ENCODE measurements at regions of chr2 and their contacts with region 1.

Region 1: DNA sequence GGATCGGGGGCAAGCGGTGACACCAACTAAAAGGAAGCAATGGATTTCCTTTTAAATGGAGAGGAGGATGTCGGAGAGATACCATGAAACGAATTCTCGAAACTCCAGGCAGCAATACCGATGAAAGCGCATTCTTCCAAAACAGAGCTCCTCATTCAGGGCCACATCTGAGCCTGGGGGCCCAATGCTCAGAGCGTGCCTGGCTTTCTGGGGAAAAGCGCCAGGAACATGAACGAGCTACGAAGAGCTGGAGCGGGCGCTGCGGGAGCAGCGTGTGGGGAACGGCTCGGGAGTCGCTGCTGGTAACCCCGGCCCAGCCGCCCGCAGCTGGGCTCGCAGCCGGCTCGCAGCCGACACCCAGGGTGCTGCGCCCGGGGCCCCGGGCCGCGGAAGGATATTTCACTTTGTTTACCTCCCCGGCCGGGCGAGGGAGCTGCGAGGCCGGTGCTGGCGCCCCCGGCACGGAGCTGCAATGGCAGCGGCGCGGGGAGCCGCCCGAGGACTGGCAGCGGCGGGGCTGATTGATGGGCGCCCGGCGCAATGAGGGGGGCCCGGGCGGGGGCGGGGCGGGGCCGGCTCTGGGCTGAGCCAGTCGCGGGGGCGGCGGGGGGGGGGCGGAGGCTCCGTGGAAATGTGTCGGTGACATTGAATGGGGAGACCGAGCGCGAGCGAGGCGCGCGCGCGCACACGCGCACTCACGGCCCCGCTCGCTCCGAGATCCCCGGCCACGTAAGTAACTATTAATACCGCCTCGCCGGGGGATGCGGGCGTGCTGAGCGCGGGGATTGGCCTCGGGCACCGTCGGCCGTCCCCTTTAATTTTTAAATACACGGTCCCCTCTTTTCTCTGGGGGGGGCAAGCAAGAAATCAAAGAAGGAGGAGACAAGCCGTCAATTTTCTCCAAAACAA is at the start of gene TRIB2:
- DNase-seq: peak; percentile 78 to 90 (median 88)
- ATAC-seq: peak; percentile 88
- H3K4me3 ChIP-seq: peak within 1 kb of the TSS; percentile 86
- H3K4me3 Mint-ChIP-seq: peak within 1 kb of the TSS; percentile 88 to 100 (median 99)
- H3K27ac ChIP-seq: peak within 1 kb of the TSS; percentile 88
- H3K27ac Mint-ChIP-seq: peak within 1 kb of the TSS; percentile 93 to 97 (median 96)
- H3K4me1 ChIP-seq: peaks cover 10 to 18% of the 10 kb centered on the region in 2 donors
- H3K4me1 Mint-ChIP-seq: peaks cover 32 to 65% (median 56%) of the 10 kb centered on the region in 7 donors
- H3K27me3 ChIP-seq: no peaks in the 10 kb centered on the region
- H3K27me3 Mint-ChIP-seq: peaks cover 0 to 15% (median 0%) of the 10 kb centered on the region in 5 donors
- total RNA-seq, gene TRIB2: 63.1 to 125 (median 110) TPM

Region 2: DNA sequence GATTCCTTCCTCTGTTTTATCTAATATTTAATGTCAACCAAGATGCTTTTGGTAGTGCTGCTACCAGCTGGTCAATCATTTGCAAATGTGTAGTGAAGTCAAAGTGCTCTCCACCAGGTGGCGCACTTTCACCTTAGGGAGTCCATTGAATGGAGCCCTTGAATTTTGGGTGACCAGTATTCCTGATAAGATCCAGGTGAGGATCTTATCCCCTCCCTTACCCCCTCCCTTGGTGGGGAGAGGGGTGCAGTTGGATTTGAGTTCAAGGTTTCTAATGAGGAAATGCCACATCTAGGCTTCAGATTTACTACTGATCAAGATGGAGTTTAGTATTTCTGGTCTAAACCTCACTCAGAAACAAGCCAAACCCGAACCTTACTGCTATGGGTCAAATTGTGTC is 1238.5 kb before region 1 on chr2:
- CTCF ChIA-PET with region 1: no interaction called
- POLR2A ChIA-PET with region 1: no interaction called
- intact Hi-C with region 1: loop called in 1 of 2 experiments (anchors 5 kb)
- DNase-seq: peak; percentile 44 to 79 (median 63)
- ATAC-seq: peak; percentile 77
- H3K4me3 ChIP-seq: no peak overlapping the region
- H3K4me3 Mint-ChIP-seq: no peak overlapping the region
- H3K27ac ChIP-seq: no peak overlapping the region
- H3K27ac Mint-ChIP-seq: no peak overlapping the region
- H3K4me1 ChIP-seq: no peaks in the 10 kb centered on the region
- H3K4me1 Mint-ChIP-seq: peaks cover 0 to 8% (median 6%) of the 10 kb centered on the region in 7 donors
- H3K27me3 ChIP-seq: no peaks in the 10 kb centered on the region
- H3K27me3 Mint-ChIP-seq: peaks cover 28 to 39% (median 32%) of the 10 kb centered on the region in 5 donors

Region 3: DNA sequence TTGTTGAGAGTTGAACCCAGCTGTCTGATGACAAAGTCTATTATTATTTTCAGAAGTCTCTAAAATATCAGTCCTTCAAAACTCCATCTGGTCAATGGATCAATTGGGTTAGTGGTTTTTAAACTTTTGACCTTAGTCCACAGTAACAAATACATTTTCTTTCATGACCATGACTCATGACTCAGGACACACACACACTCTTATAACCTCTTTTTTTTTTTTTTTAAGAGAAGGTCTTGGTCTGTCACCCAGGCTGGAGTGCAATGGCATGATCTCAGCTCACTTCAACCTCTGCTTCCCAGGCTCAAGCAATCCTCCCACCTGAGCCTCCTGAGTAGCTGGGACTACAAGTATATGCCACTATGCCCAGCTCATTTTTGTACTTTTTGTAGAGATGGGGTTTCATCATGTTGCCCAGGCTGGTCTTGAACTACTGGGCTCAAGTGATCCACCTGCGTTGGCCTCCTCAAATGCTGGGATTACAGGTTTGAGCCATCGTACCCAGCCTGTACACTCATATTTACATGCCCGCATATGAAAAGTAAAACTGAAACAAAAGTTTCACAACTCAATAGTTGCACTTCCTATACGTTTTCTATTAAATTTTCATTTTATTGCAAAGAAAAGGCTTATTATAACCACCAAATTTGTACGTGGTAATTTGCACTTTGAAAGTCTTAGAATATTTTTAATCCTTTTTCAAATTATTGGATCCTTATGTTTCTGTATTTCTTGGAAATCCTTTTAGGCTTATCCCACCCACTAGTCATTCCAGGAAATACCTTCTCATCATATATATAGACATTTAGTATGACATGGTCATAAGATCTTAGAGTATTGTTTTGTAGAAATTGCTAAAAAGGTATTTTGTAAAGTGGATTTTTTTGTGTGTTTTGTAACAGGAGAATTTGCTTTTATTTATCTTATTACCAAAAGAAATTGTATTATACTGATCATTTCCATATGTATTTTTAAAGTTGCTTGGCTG is 771.1 kb before region 1 on chr2:
- CTCF ChIA-PET with region 1: interaction called, 3 read pairs
- POLR2A ChIA-PET with region 1: no interaction called
- intact Hi-C with region 1: loop called in 1 of 2 experiments (anchors 5 kb)
- DNase-seq: peak in 1 of 9 donors; percentile 6
- ATAC-seq: peak; percentile 69
- H3K4me3 ChIP-seq: peak overlapping the region; percentile 40
- H3K4me3 Mint-ChIP-seq: peak overlapping the region; percentile 61 to 83 (median 80)
- H3K27ac ChIP-seq: no peak overlapping the region
- H3K27ac Mint-ChIP-seq: peak overlapping the region; percentile 75 to 96 (median 80)
- H3K4me1 ChIP-seq: peaks cover 5 to 11% of the 10 kb centered on the region in 2 donors
- H3K4me1 Mint-ChIP-seq: peaks cover 0 to 25% (median 16%) of the 10 kb centered on the region in 7 donors
- H3K27me3 ChIP-seq: no peaks in the 10 kb centered on the region
- H3K27me3 Mint-ChIP-seq: peaks cover 0 to 6% (median 0%) of the 10 kb centered on the region in 5 donors

Region 4: GRCh38 chr2:12106440-12107080 is 610.0 kb before region 1 on chr2:
- CTCF ChIA-PET with region 1: no interaction called
- POLR2A ChIA-PET with region 1: interaction called, 3 read pairs
- intact Hi-C with region 1: loop called in 1 of 2 experiments (anchors 5 kb)
- DNase-seq: peak in 1 of 9 donors; percentile 40
- ATAC-seq: no peak
- H3K4me3 ChIP-seq: no peak overlapping the region
- H3K4me3 Mint-ChIP-seq: no peak overlapping the region
- H3K27ac ChIP-seq: no peak overlapping the region
- H3K27ac Mint-ChIP-seq: no peak overlapping the region
- H3K4me1 ChIP-seq: peaks cover 5 to 31% of the 10 kb centered on the region in 2 donors
- H3K4me1 Mint-ChIP-seq: peaks cover 16 to 57% (median 47%) of the 10 kb centered on the region in 7 donors
- H3K27me3 ChIP-seq: no peaks in the 10 kb centered on the region
- H3K27me3 Mint-ChIP-seq: no peaks in the 10 kb centered on the region

Region 5: GRCh38 chr2:12293874-12294273 is 422.7 kb before region 1 on chr2:
- CTCF ChIA-PET with region 1: no interaction called
- POLR2A ChIA-PET with region 1: interaction called, 6 read pairs
- intact Hi-C with region 1: loop called in 1 of 2 experiments (anchors 2 kb)
- DNase-seq: no peak
- ATAC-seq: peak; percentile 27
- H3K4me3 ChIP-seq: no peak overlapping the region
- H3K4me3 Mint-ChIP-seq: peak overlapping the region in 5 of 10 donors; percentile 13 to 75 (median 60)
- H3K27ac ChIP-seq: no peak overlapping the region
- H3K27ac Mint-ChIP-seq: peak overlapping the region in 4 of 9 donors; percentile 18 to 90 (median 68)
- H3K4me1 ChIP-seq: peaks cover 0 to 16% of the 10 kb centered on the region in 2 donors
- H3K4me1 Mint-ChIP-seq: peaks cover 19 to 53% (median 40%) of the 10 kb centered on the region in 7 donors
- H3K27me3 ChIP-seq: no peaks in the 10 kb centered on the region
- H3K27me3 Mint-ChIP-seq: peaks cover 0 to 4% (median 0%) of the 10 kb centered on the region in 5 donors

Region 6: GRCh38 chr2:12501469-12502158 is 214.9 kb before region 1 on chr2:
- CTCF ChIA-PET with region 1: interaction called, 6 read pairs
- POLR2A ChIA-PET with region 1: interaction called, 17 read pairs
- intact Hi-C with region 1: loop called (anchors 1 kb)
- DNase-seq: peak in 8 of 9 donors; percentile 39 to 74 (median 70)
- ATAC-seq: peak; percentile 86
- H3K4me3 ChIP-seq: peak overlapping the region; percentile 5
- H3K4me3 Mint-ChIP-seq: peak overlapping the region; percentile 64 to 83 (median 77)
- H3K27ac ChIP-seq: peak overlapping the region; percentile 69
- H3K27ac Mint-ChIP-seq: peak overlapping the region; percentile 87 to 96 (median 91)
- H3K4me1 ChIP-seq: peaks cover 89 to 98% of the 10 kb centered on the region in 2 donors
- H3K4me1 Mint-ChIP-seq: peaks cover 74 to 100% (median 98%) of the 10 kb centered on the region in 7 donors
- H3K27me3 ChIP-seq: no peaks in the 10 kb centered on the region
- H3K27me3 Mint-ChIP-seq: no peaks in the 10 kb centered on the region

Region 7: DNA sequence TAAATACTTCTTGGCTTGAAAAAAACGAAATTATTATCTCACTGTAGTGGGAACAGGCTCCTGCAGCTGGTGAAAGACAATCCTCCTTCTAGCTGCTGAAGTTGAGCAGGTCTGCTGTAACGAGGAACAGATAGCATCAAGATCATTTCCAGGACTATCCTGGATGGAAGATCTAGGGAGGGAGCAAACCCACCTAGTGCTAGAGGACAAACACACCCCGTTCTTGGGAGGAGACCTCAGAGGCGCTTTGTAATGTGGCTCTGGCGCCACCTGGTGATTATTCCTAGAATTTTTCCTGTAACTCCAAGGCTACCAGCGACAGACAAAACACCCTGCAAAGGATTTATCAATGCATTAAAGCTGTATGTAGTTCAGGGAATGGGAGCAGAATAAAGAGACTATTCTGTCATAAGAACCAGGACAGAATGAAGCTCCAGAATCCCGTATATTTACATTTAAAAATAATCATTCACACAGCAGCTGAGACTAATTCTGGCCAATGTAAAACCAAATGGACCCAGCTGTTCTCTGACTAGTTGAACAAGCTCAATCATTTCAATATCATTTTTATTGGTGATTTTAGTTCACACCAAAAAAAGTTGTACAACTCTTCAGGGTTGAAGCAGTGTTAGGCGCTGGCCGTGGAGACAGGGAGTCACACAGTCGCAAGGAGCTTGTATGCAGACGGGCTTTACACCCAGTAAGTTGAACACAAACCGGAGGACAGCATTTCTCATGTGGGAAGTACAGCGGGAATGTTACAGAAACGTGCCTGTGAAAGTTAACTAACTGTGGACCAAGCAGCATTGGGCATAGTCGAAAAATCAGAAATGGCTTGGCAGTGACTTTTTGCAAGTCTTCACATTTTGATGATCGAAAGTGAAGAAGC is 290.5 kb after region 1 on chr2:
- CTCF ChIA-PET with region 1: interaction called, 21 read pairs
- POLR2A ChIA-PET with region 1: interaction called, 3 read pairs
- intact Hi-C with region 1: loop called (anchors 1 kb)
- DNase-seq: peak; percentile 31 to 70 (median 55)
- ATAC-seq: peak; percentile 66
- H3K4me3 ChIP-seq: no peak overlapping the region
- H3K4me3 Mint-ChIP-seq: no peak overlapping the region
- H3K27ac ChIP-seq: no peak overlapping the region
- H3K27ac Mint-ChIP-seq: peak overlapping the region in 1 of 9 donors; percentile 5
- H3K4me1 ChIP-seq: no peaks in the 10 kb centered on the region
- H3K4me1 Mint-ChIP-seq: peaks cover 0 to 9% (median 0%) of the 10 kb centered on the region in 7 donors
- H3K27me3 ChIP-seq: no peaks in the 10 kb centered on the region
- H3K27me3 Mint-ChIP-seq: peaks cover 5 to 52% (median 11%) of the 10 kb centered on the region in 5 donors

Measured in naive thymus-derived CD4-positive, alpha-beta T cell (primary cell).